AG04450 (cell line): ENCODE measurements at regions of chr2 and their contacts with region 1.

Region 1: DNA sequence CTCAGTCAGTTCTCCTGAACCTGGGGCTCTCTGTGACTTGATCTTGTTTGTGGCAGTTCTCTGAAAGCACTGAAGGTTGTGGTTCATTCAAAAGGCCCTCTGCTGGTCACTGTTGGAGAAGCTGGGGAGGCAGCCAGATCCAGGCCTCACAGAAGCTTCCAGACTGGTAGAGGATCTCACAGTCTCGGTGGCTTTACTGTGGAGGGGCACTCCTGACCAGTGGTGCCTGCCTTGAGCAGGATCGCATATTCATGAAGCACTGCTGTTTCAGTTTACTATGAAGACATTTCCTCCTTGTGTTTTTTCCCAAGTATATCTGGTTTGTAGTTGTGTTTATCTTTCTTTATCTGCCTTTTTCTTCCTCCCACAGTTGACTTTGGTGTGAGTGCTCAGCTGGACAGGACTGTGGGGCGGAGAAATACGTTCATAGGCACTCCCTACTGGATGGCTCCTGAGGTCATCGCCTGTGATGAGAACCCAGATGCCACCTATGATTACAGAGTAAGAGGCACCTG is 133.9 kb downstream of the MAP4K4 start:
- DNase-seq: peak; percentile 37
- H3K4me3 ChIP-seq: no peak overlapping the region
- H3K27ac ChIP-seq: no peak overlapping the region
- H3K27me3 ChIP-seq: no peaks in the 10 kb centered on the region
- CTCF ChIP-seq: peak; percentile 82

Region 2: DNA sequence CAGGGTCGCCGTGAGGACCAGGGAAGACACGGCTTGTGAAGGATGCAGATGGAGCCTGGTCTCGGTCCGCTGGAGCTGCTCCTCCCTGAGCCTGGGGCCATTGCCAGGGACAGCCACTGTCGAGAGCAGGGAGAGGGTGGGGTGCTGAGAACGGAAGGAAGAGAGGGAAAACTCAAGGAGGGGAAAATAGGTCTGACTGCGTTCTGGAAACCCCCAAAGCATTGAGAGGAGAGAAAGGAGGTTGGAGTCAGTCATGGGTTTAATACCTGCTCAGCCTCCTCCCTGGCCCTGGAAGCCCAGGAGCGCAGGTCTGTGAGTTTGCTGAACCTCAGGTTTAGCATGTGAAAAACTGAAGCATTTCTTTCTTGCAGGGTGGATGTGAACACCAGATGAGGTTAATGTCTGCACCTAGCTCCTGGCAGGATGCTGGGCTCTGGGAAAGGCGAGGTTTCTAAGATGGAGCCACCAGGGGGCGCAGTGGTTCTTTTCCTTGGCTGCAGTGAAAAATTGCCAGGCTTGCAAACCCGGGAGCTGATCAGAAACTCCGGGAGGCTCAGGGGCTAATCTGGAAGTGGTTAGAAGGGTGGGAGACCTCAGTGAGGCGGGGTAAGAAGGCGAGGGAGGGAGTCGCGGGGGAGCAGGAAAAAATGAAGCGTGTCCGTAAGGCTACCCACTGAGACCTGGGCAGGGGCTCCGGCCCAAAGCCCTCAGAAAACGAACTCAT is 489.3 kb before region 1 on chr2:
- CTCF ChIA-PET with region 1: interaction called, 21 read pairs
- POLR2A ChIA-PET with region 1: no interaction called
- DNase-seq: peak; percentile 29
- H3K4me3 ChIP-seq: no peak overlapping the region
- H3K27ac ChIP-seq: no peak overlapping the region
- H3K27me3 ChIP-seq: no peaks in the 10 kb centered on the region
- CTCF ChIP-seq: peak; percentile 87

Region 3: DNA sequence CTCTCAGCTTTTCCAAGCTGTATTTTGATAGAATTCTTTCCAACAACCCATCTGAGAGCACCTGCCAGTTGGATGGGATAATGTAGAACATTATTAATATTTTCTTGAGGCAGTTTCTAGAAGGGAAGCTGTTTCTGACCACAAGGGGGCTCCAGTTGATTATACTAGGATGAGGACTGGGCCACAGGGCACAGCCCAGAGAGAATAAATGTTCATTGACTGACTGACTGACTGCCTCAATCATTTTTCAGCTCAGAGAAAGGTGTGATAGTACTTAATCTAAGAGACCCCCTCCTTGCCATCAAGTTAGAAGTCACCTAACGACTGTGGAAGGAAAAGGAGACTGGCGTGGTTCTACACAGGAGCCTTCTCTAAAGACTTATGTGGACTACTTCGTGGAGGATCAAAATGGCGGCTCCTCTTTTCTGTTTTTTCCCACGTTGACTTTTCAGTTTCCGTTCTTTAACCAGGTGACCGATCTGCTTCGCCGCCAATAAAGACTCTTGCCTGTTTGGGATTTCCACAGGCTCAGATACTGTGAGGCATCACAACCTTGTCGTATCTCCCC is 412.2 kb before region 1 on chr2:
- CTCF ChIA-PET with region 1: interaction called, 53 read pairs
- POLR2A ChIA-PET with region 1: no interaction called
- DNase-seq: peak; percentile 27
- H3K4me3 ChIP-seq: no peak overlapping the region
- H3K27ac ChIP-seq: no peak overlapping the region
- H3K27me3 ChIP-seq: no peaks in the 10 kb centered on the region
- CTCF ChIP-seq: peak; percentile 86

Region 4: DNA sequence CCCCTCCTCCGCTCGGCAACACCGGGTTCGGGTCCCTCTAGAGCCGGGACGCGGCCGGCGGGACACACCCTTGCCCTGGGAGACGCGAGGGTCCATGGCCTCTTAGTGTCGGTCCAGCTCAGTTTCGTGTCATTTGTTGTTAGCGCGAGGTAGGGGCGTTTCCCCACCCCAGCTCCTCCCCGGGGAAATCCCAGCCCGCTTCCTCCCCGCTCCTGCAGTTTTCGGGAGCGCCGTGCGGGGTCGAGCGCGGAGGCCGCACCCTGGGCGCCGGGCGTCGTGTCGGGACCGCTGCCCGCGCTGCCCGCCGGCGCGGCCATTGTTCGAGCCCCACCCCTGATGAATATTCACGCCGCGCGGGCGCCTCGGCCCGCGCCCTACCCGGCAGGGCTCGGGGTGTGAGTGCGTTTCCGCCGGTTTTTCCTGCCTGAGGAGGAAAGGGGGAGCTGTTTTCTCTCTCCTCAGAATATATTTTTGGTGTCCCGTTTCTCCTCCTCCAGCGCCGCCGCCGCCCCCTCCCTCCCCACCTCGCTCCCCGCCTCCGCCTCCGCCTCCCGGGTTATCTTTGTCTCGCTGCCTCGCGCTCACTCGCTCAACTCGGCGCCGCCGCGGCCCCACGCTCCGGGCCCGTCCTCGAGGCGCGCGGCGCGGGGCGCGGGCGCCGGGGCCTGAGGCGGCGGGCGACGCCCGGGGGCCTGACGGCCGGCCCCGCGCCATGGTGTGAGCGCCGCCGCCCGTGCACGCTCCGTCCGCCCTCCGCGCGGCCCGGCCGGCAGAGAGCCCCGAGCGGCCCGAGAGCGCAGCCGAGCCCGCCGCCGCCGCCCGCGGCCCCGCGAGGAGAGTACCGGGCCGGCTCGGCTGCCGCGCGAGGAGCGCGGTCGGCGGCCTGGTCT is 134.0 kb before region 1 on chr2 and contains the start of gene MAP4K4:
- CTCF ChIA-PET with region 1: interaction called, 32 read pairs
- POLR2A ChIA-PET with region 1: interaction called, 5 read pairs
- DNase-seq: peak; percentile 49
- H3K4me3 ChIP-seq: peak within 1 kb of the TSS; percentile 85
- H3K27ac ChIP-seq: peak within 1 kb of the TSS; percentile 65
- H3K27me3 ChIP-seq: no peaks in the 10 kb centered on the region
- CTCF ChIP-seq: peak; percentile 38
- polyA plus RNA-seq, gene MAP4K4: 152 and 158 TPM in 2 replicates

Region 5: GRCh38 chr2:101770726-101771125 is 60.7 kb before region 1 on chr2:
- CTCF ChIA-PET with region 1: interaction called, 14 read pairs
- POLR2A ChIA-PET with region 1: no interaction called
- DNase-seq: no peak
- H3K4me3 ChIP-seq: no peak overlapping the region
- H3K27ac ChIP-seq: no peak overlapping the region
- H3K27me3 ChIP-seq: no peaks in the 10 kb centered on the region
- CTCF ChIP-seq: peak; percentile 17

Region 6: DNA sequence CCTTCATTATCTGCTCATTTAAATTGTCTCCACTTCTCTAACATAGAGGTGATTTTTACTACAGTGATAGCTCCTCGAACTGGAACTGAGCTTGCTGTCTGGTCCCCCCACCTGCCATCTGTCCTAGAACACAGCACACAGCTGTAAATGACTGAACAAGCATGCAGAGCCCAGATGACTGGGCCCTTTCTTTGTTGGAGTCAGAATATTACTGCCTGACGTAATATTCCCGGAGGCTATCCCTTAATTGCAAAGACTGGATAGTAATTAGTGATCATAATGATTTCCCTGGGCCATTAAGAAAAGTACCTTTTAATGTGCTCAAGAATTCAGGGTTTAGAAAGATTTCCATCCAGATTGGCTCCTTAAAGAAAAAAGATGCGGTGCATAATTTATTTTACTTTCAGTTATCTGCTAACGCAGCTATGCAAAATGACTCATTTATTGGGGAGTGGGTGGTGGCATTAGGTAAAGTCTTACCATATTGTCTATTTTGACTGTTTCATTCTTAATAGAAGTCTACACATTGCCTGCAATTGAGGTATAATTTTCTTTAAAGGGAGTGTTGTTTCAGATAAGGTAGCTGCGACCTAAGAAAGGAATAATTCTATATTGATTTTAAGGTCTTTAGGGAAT is 49.5 kb before region 1 on chr2:
- CTCF ChIA-PET with region 1: no interaction called
- POLR2A ChIA-PET with region 1: no interaction called
- DNase-seq: no peak
- H3K4me3 ChIP-seq: no peak overlapping the region
- H3K27ac ChIP-seq: no peak overlapping the region
- H3K27me3 ChIP-seq: no peaks in the 10 kb centered on the region
- CTCF ChIP-seq: no peak

Region 7: GRCh38 chr2:102172745-102173144 is 341.3 kb after region 1 on chr2:
- CTCF ChIA-PET with region 1: no interaction called
- POLR2A ChIA-PET with region 1: no interaction called
- DNase-seq: no peak
- H3K4me3 ChIP-seq: no peak overlapping the region
- H3K27ac ChIP-seq: no peak overlapping the region
- H3K27me3 ChIP-seq: no peaks in the 10 kb centered on the region
- CTCF ChIP-seq: no peak